ENCODE measurements at regions of chr11 and their contacts with region 1.

Region 1: GRCh38 chr11:723120-723883 is 17.3 kb downstream of the EPS8L2 start:
- DNase-seq: no peak
- H3K4me3 ChIP-seq: no peak overlapping the region
- H3K27ac ChIP-seq: no peak overlapping the region
- H3K4me1 ChIP-seq: peaks cover 0 to 7% of the 10 kb centered on the region in 2 donors
- H3K27me3 ChIP-seq: peaks cover 0 to 8% of the 10 kb centered on the region in 2 donors
- CTCF ChIP-seq: peak; percentile 39 to 69 (median 50)
- POLR2A ChIP-seq: no peak

Region 2: GRCh38 chr11:554824-555472 is 168.4 kb before region 1 on chr11:
- intact Hi-C with region 1: loop called (anchors 5 kb)
- DNase-seq: peak in 1 of 2 donors; percentile 52
- H3K4me3 ChIP-seq: no peak overlapping the region
- H3K27ac ChIP-seq: no peak overlapping the region
- H3K4me1 ChIP-seq: peaks cover 0 to 17% of the 10 kb centered on the region in 2 donors
- H3K27me3 ChIP-seq: peaks cover 27 to 29% of the 10 kb centered on the region in 2 donors
- CTCF ChIP-seq: peak; percentile 45 to 77 (median 64)
- POLR2A ChIP-seq: no peak

Region 3: GRCh38 chr11:662689-663274 is 60.5 kb before region 1 on chr11:
- intact Hi-C with region 1: loop called (anchors 5 kb)
- DNase-seq: peak; percentile 67 to 74
- H3K4me3 ChIP-seq: no peak overlapping the region
- H3K27ac ChIP-seq: no peak overlapping the region
- H3K4me1 ChIP-seq: no peaks in the 10 kb centered on the region
- H3K27me3 ChIP-seq: no peaks in the 10 kb centered on the region
- CTCF ChIP-seq: peak; percentile 58 to 84 (median 73)
- POLR2A ChIP-seq: no peak